Activated naive CD4-positive, alpha-beta T cell treated with anti-CD3 and anti-CD28 coated beads for 36 hours (primary cell): ENCODE measurements at regions of chr5 and their contacts with region 1.

Region 1: DNA sequence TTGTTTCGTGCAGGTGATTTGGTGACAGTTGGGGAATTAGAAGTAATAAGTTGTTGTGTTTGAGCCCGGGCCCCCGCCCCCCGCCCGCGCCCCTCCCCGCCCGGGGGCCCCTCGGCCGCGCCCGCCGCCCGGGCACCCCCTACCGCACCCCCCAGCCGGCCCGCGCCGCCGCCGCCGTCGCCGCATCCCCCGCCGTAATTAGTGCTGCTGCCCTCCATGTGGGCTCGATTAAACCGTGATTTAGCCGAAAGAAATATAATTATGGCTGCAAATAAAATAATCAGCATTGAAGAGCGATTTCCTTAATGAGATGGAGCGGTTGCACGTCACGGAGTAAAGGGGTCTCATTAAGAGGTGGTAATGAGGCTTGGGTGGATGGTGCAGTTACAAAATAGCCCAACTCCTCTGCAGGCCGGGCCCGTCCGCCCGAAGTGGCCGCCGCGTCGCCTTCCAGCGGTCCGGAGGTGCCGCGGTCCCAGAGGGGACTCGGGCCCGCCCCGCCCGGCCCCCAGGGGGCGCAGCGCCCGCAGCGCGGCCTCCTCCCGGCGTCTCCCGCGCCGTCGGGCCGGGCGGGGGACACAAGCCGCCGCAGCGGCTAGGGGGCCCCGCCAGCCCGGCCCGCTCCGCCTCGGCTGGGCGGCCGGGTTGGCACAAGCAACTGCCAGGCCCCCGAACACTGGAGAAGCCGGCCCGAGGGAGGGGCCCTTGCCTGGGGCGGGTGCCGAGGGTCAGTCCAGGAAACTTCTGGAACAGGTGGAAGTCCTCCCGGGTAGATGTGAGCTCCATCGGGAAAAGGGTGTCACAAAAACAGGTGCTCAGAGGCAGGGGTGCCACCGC is 6.9 kb upstream of the OTP start:
- DNase-seq: no peak
- H3K4me3 Mint-ChIP-seq: peak overlapping the region; percentile 39
- H3K27ac Mint-ChIP-seq: no peak overlapping the region
- H3K4me1 Mint-ChIP-seq: peaks cover 19% of the 10 kb centered on the region
- H3K27me3 Mint-ChIP-seq: peaks cover 80% of the 10 kb centered on the region

Region 2: DNA sequence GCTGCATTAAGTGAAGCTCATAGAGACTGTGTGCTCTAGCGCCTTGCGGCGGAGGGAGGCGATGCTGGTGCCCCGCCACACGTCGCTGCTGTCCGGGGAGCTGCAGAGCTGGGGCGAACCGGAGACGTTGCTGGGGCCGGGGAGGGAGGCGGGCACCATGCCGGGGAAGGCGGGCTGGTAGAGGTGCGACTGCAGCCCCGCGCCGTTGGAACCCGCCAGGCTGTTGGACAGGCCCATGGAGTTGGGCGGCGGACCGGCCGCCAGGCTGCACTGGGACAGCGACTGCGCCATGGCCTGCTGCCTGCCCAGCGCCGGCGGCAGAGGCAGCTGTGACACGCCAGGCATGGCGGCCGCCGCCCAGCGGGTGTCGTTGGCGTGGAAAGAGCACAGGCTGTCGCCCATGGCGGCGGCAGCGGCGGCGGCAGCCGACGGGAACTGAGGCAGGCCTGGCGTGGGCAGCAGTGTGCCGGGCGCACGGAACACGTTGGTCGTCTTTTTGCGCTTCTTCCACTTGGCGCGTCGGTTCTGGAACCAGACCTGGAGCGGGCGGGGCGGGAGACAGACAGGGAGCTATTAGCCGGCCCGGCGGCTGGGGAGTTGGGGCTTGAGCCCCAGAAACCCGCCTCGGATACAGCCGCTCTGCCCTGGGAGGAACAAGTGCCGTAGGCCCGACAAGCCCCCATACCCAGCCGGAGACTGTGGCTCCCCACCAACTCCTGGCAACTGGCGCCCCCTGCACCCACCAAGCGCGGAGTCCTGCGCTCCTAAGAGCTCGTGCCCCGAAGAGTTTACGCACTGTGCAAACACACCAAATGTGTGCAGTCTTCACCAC is 14.9 kb before region 1 on chr5:
- CTCF ChIA-PET with region 1: interaction called, 3 read pairs
- intact Hi-C with region 1: loop called (anchors 2 kb)
- DNase-seq: peak; percentile 72
- H3K4me3 Mint-ChIP-seq: peak overlapping the region; percentile 77
- H3K27ac Mint-ChIP-seq: no peak overlapping the region
- H3K4me1 Mint-ChIP-seq: peaks cover 20% of the 10 kb centered on the region
- H3K27me3 Mint-ChIP-seq: peaks cover 70% of the 10 kb centered on the region

Region 3: GRCh38 chr5:77842247-77842646 is 196.9 kb after region 1 on chr5:
- CTCF ChIA-PET with region 1: no interaction called
- intact Hi-C with region 1: no loop called
- DNase-seq: no peak
- H3K4me3 Mint-ChIP-seq: no peak overlapping the region
- H3K27ac Mint-ChIP-seq: no peak overlapping the region
- H3K4me1 Mint-ChIP-seq: peaks cover 8% of the 10 kb centered on the region
- H3K27me3 Mint-ChIP-seq: peaks cover 43% of the 10 kb centered on the region

Region 4: DNA sequence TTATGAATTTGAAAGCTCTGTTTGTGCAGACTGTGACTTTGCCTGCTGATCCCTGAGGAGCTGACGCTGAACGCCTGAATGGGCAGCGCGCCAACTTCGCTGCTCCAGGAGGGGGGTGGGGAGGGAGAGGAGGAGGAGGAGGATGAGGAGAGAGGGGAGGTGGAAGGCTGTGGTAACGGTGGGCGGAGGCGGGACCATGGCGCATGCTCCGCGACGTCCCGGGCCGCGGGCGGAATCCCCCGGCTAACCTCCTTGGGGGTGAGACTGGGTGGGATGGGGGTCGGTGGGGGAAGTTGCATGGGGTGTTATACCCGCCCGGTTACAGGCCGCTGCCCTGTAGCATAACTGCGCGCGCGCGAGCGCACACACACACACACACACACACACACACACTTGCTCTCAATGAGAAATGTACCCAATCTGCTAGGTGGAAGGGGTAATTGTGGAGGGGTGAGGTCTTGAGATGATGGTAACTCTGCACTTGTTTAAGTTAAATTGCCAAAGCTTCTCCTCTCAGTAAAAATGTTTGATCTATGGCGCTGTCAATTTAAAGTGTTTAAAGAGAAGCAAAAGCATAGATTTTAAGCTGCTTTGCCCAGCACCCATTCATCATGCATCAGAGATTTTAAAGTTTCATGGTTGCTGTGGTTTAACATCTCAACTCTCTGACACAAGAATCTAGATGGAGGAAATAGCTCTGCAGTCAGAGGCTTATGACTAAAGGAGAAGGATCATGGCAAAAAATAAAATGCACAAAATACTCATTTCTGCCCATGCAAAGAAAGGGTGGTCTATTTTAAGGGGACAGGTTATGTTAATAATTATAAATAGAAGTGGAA is 207.4 kb after region 1 on chr5:
- CTCF ChIA-PET with region 1: no interaction called
- intact Hi-C with region 1: loop called (anchors 5 kb)
- DNase-seq: peak; percentile 24
- H3K4me3 Mint-ChIP-seq: peak overlapping the region; percentile 75
- H3K27ac Mint-ChIP-seq: no peak overlapping the region
- H3K4me1 Mint-ChIP-seq: peaks cover 17% of the 10 kb centered on the region
- H3K27me3 Mint-ChIP-seq: peaks cover 37% of the 10 kb centered on the region

Region 5: GRCh38 chr5:77972469-77973252 is 327.3 kb after region 1 on chr5:
- CTCF ChIA-PET with region 1: no interaction called
- intact Hi-C with region 1: loop called (anchors 2 kb)
- DNase-seq: peak; percentile 43
- H3K4me3 Mint-ChIP-seq: peak overlapping the region; percentile 69
- H3K27ac Mint-ChIP-seq: no peak overlapping the region
- H3K4me1 Mint-ChIP-seq: peaks cover 13% of the 10 kb centered on the region
- H3K27me3 Mint-ChIP-seq: peaks cover 69% of the 10 kb centered on the region